T-cell (primary cell): ENCODE measurements at regions of chr17 and their contacts with region 1.

Region 1: GRCh38 chr17:40121181-40122135 is at the start of gene MSL1:
- DNase-seq: peak; percentile 64 to 91 (median 78)
- ATAC-seq: peak; percentile 72 to 75 (median 74)
- H3K4me3 ChIP-seq: peak within 1 kb of the TSS; percentile 72 to 92
- H3K4me3 Mint-ChIP-seq: peak within 1 kb of the TSS; percentile 78 to 90 (median 86)
- H3K27ac ChIP-seq: peak within 1 kb of the TSS; percentile 68
- H3K27ac Mint-ChIP-seq: peak within 1 kb of the TSS; percentile 72 to 82
- H3K4me1 ChIP-seq: peaks cover 8 to 27% of the 10 kb centered on the region in 2 experiments
- H3K4me1 Mint-ChIP-seq: peaks cover 36 to 44% (median 36%) of the 10 kb centered on the region in 3 donors
- H3K27me3 ChIP-seq: no peaks in the 10 kb centered on the region
- H3K27me3 Mint-ChIP-seq: no peaks in the 10 kb centered on the region
- total RNA-seq, gene MSL1: 106 to 136 (median 115) TPM

Region 2: DNA sequence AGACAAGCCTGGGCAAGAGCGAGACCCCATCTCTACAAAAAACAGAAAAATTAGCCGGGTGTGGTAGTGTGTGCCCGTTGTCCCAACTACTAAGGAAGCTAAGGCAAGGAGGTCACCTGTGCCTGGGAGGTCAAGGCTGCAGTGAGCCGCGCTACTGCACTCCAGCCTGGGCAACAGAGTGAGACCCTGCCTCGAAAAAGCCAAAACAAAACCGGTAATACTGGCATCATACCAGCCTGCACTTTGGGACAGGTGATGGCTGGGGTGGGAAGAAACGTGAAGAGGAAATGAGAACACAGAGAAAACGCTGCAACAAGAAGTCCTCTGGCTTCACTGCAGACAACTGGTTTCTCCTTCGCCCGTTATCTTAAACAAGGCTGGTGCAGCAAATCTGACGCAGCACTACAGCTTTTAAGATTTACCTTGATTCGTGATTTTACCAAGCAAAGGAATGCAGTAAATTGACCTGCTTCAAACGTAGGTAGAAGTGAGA is 18.2 kb after region 1 on chr17:
- CTCF ChIA-PET with region 1: interaction called in 1 of 2 experiments, 10 read pairs
- POLR2A ChIA-PET with region 1: interaction called, 4 to 9 read pairs
- DNase-seq: peak in 1 of 35 experiments; percentile 15
- ATAC-seq: peak in 3 of 4 experiments; percentile 5 to 6 (median 5)
- H3K4me3 ChIP-seq: peak overlapping the region; percentile 60 to 78
- H3K4me3 Mint-ChIP-seq: peak overlapping the region; percentile 89 to 92 (median 89)
- H3K27ac ChIP-seq: peak overlapping the region; percentile 94
- H3K27ac Mint-ChIP-seq: peak overlapping the region; percentile 96 to 98
- H3K4me1 ChIP-seq: peaks cover 12 to 35% of the 10 kb centered on the region in 2 experiments
- H3K4me1 Mint-ChIP-seq: peaks cover 30 to 44% (median 41%) of the 10 kb centered on the region in 3 donors
- H3K27me3 ChIP-seq: no peaks in the 10 kb centered on the region
- H3K27me3 Mint-ChIP-seq: no peaks in the 10 kb centered on the region

Region 3: GRCh38 chr17:40157973-40158372 is 36.5 kb after region 1 on chr17:
- CTCF ChIA-PET with region 1: no interaction called
- POLR2A ChIA-PET with region 1: no interaction called
- DNase-seq: no peak
- ATAC-seq: no peak
- H3K4me3 ChIP-seq: no peak overlapping the region
- H3K4me3 Mint-ChIP-seq: no peak overlapping the region
- H3K27ac ChIP-seq: no peak overlapping the region
- H3K27ac Mint-ChIP-seq: peak overlapping the region; percentile 82 to 83
- H3K4me1 ChIP-seq: peaks cover 0 to 3% of the 10 kb centered on the region in 2 experiments
- H3K4me1 Mint-ChIP-seq: peaks cover 34 to 38% (median 35%) of the 10 kb centered on the region in 3 donors
- H3K27me3 ChIP-seq: no peaks in the 10 kb centered on the region
- H3K27me3 Mint-ChIP-seq: no peaks in the 10 kb centered on the region

Region 4: DNA sequence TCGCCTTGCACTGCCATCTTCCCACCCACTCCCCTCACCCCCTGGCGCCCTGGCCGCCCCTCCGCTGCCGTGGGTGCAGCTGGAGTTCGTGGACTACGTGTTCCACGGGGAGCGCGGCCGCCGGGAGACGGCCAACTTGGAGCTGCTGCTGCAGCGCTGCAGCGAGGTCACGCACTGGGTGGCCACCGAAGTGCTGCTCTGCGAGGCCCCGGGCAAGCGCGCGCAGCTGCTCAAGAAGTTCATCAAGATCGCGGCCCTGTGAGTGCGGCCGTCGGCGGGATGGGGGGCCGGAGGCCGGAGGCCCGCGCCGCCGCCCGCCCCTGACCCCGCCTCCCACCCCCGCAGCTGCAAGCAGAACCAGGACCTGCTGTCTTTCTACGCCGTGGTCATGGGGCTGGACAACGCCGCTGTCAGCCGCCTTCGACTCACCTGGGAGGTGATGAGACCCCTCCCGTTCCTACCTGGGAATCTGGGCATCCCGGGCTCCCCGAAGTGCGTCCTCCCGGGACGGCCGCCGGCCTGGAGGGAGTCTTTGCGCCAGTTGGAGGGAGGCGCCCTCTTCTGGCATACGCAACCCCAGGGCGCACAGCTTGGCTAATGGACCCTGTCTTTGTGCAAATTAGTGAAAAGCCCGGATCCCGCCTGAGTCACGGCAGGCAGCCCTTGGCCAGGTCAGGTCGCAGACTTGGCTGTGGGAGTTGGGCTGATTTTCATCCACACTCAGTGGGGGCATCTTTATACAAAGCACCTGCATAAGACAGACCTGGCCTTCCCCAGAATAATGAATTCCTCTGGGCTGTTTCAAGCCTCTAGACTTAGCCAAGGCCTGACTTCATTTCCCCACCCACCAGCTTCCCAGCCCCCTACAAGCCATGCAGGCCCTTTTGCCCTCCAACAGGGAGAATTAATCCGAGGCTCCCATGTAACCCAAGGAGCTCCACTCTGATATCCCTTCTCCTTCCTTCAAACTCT is 70.1 kb after region 1 on chr17:
- CTCF ChIA-PET with region 1: interaction called in 1 of 2 experiments, 10 read pairs
- POLR2A ChIA-PET with region 1: interaction called in 1 of 2 experiments, 4 read pairs
- DNase-seq: peak in 34 of 35 experiments; percentile 22 to 77 (median 48)
- ATAC-seq: peak; percentile 85 to 91 (median 88)
- H3K4me3 ChIP-seq: peak overlapping the region; percentile 51 to 64
- H3K4me3 Mint-ChIP-seq: peak overlapping the region; percentile 86 to 95 (median 92)
- H3K27ac ChIP-seq: no peak overlapping the region
- H3K27ac Mint-ChIP-seq: peak overlapping the region in 1 of 2 donors; percentile 49
- H3K4me1 ChIP-seq: peaks cover 0 to 15% of the 10 kb centered on the region in 2 experiments
- H3K4me1 Mint-ChIP-seq: peaks cover 4 to 18% (median 9%) of the 10 kb centered on the region in 3 donors
- H3K27me3 ChIP-seq: peaks cover 0 to 15% of the 10 kb centered on the region in 2 experiments
- H3K27me3 Mint-ChIP-seq: no peaks in the 10 kb centered on the region

Region 5: GRCh38 chr17:40203131-40203530 is 81.7 kb after region 1 on chr17:
- CTCF ChIA-PET with region 1: no interaction called
- POLR2A ChIA-PET with region 1: interaction called in 1 of 2 experiments, 12 read pairs
- DNase-seq: no peak
- ATAC-seq: no peak
- H3K4me3 ChIP-seq: no peak overlapping the region
- H3K4me3 Mint-ChIP-seq: no peak overlapping the region
- H3K27ac ChIP-seq: no peak overlapping the region
- H3K27ac Mint-ChIP-seq: no peak overlapping the region
- H3K4me1 ChIP-seq: peaks cover 0 to 5% of the 10 kb centered on the region in 2 experiments
- H3K4me1 Mint-ChIP-seq: peaks cover 0 to 4% (median 0%) of the 10 kb centered on the region in 3 donors
- H3K27me3 ChIP-seq: peaks cover 0 to 13% of the 10 kb centered on the region in 2 experiments
- H3K27me3 Mint-ChIP-seq: peaks cover 3 to 12% of the 10 kb centered on the region in 2 donors